A549 (cell line): ENCODE measurements at regions of chr1 and their contacts with region 1.

Region 1: GRCh38 chr1:154936555-154937084 is at the start of gene PMVK:
- DNase-seq: peak; percentile 97
- ATAC-seq: peak; percentile 86 to 91
- H3K4me3 ChIP-seq: peak within 1 kb of the TSS; percentile 61
- H3K27ac ChIP-seq: peak within 1 kb of the TSS; percentile 97 to 98
- H3K4me1 ChIP-seq: peaks cover 25% of the 10 kb centered on the region
- CTCF ChIP-seq: peak; percentile 39; the same call in 2 of the 3 replicates
- EP300 ChIP-seq: no peak
- POLR2A ChIP-seq: peak; percentile 80
- RAD21 ChIP-seq: peak in 1 of 2 experiments; percentile 32; a peak in 3 of 5 replicates
- polyA plus RNA-seq, gene PMVK: 31.4 and 35.7 TPM in 2 replicates

Region 2: GRCh38 chr1:154925335-154926170 is 11.1 kb before region 1 on chr1:
- CTCF ChIA-PET with region 1: interaction called, 10 read pairs
- POLR2A ChIA-PET with region 1: interaction called, 3 read pairs
- DNase-seq: no peak
- ATAC-seq: no peak
- H3K4me3 ChIP-seq: no peak overlapping the region
- H3K27ac ChIP-seq: no peak overlapping the region
- H3K4me1 ChIP-seq: no peaks in the 10 kb centered on the region
- CTCF ChIP-seq: no peak
- EP300 ChIP-seq: no peak
- POLR2A ChIP-seq: no peak
- RAD21 ChIP-seq: no peak

Region 3: DNA sequence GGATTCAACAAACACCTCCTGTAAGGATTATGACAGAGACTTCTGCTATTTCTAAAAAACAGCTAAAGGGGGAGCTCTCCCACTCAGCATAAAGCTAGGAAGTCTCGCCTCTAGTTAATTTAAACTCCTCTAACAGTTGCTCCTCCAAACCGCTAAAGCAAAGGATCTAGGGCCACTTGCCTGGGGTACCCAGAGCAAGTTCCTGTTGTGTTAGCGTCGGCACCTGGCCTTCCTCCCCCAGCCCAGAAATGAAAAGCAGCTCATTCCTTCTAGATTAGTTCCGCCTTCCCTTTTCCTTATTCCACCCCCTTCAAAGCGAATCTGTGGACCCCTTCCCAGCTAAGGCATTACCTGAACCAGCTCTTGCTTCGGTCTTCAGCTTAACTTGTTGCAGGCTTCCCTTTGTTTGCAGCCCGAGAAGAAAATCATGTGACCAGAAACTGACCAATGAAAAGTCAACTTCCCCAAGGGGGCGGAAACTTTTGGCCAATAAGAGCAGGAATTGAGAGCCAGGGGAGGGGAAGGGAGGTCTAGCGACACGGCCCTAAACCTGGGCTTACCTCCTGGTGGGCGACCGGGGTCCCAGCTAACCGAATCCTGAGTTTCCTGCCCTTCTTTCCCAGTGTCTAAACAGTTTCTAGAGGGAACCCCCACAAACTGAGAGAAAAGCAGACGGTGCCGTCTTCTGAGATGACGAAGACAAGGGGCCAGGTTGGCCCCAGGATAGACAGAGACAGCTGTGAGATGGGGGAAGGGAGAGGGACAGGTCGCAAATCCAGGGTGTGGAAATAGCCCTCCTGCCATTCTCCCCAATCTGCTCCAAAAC is 19.3 kb after region 1 on chr1 and contains the start of gene PBXIP1:
- CTCF ChIA-PET with region 1: interaction called, 13 read pairs
- POLR2A ChIA-PET with region 1: interaction called, 5 read pairs
- DNase-seq: peak; percentile 87 to 99
- ATAC-seq: peak; percentile 83 to 90
- H3K4me3 ChIP-seq: peak within 1 kb of the TSS; percentile 49
- H3K27ac ChIP-seq: peak within 1 kb of the TSS; percentile 49 to 82
- H3K4me1 ChIP-seq: peaks cover 27% of the 10 kb centered on the region
- CTCF ChIP-seq: 0 out of 3 replicates have a peak, but pooled peaks have one; percentile 29
- EP300 ChIP-seq: no peak
- POLR2A ChIP-seq: no peak
- RAD21 ChIP-seq: no peak; a peak in 1 of 5 replicates
- polyA plus RNA-seq, gene PBXIP1: 15.0 and 16.8 TPM in 2 replicates

Region 4: DNA sequence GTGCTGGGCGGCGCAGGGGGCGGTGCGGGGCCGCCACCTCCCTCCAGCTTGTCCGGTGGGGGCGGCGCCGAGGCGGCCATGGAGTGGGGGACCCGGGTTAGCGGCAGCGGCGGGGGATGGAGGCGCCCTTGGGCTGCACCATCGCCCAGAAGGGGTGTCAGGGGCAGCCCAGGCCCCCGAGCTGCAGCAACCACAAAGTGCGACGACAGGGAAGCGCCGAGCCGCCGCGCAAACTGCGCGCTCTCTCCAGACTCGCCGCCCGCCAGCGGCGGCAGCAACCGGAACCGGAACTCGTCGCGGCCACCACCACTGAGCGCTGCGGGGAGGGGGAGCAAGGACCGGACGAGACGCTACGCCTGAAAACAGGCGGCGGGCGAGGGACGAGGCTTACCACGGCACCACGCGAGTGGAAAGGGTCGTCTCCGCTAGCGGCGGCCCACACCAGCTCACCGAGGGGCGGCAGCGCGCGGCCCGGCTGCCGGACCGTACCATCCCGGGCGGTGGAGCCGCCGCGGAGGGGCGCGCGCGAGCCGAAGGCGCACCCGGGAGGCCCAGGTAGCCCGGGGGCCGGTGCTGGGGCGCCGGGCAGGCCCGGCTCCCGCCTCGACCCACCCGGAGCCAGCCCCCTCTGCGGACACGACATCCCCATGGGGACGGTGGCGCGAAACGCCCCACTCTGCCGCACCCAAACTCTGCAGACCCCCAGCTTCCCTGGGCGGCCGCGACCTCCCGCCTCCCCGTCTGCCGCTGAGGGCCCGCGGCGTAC is 25.1 kb after region 1 on chr1 and contains the start of gene PYGO2:
- CTCF ChIA-PET with region 1: interaction called, 10 read pairs
- POLR2A ChIA-PET with region 1: no interaction called
- DNase-seq: peak; percentile 76 to 81
- ATAC-seq: peak; percentile 82 to 90
- H3K4me3 ChIP-seq: peak within 1 kb of the TSS; percentile 74
- H3K27ac ChIP-seq: peak within 1 kb of the TSS; percentile 97
- H3K4me1 ChIP-seq: peaks cover 28% of the 10 kb centered on the region
- CTCF ChIP-seq: peak; percentile 90
- EP300 ChIP-seq: no peak
- POLR2A ChIP-seq: peak; percentile 66
- RAD21 ChIP-seq: peak in 1 of 2 experiments; percentile 81; a peak in 4 of 5 replicates
- polyA plus RNA-seq, gene PYGO2: 24.6 and 25.8 TPM in 2 replicates